K562 (cell line): ENCODE measurements at regions of chr11 and their contacts with region 1.

Region 1: DNA sequence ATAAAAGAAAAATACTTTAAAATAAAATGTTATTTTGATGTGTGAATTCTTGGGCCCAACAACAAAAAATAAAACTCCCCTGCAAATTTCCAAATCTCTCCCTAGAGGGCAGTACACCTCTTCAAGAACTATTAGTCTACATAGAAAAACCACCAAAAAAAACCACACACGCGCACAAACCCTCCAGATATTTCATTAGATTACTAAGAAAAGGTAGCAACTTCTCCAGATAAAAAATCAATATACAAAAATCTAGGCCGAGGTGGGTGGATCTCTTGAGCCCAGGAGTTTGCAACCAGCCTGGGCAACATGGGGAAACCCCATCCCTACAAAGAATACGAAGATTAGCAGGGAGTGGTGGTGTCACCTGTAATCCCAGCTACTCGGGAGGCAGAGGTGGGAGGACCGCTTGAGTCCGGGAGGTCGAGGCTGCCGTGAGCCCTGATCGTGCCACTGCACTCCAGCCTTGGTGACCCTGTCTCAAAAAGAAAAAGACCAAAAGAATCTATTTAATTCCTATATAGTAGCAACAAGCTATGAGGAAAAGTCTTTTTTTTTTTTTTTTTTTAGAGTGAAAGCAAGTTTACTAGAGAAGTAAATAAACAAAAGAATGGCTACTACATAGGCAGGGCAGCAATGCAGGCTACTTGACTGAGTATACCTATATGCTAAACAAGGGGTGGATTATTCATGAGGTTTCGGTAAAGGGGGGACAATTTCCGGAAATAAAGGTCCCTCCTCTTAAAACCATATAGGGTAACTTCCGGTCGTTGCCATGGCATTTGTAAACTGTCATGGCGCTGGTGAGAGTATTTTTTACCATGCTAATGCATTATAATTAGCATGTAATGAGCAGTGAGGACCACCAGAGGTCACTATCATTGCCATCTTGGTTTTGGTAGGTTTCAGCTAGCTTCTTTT is 13.1 kb downstream of the B3GNT6 start:
- DNase-seq: peak; percentile 54 to 93 (median 73)
- ATAC-seq: peak; percentile 91
- H3K4me3 ChIP-seq: peak overlapping the region; percentile 37
- H3K27ac ChIP-seq: no peak overlapping the region
- H3K4me1 ChIP-seq: peaks cover 3 to 6% of the 10 kb centered on the region in 2 experiments; a peak in 4 of 5 replicates
- H3K27me3 ChIP-seq: no peaks in the 10 kb centered on the region
- CTCF ChIP-seq: peak; percentile 65 to 90 (median 69)
- EP300 ChIP-seq: no peak
- POLR2A ChIP-seq: no peak
- RAD21 ChIP-seq: peak; percentile 60 to 71

Region 2: GRCh38 chr11:76721755-76722677 is 325.3 kb before region 1 on chr11:
- CTCF ChIA-PET with region 1: interaction called, 4 read pairs
- POLR2A ChIA-PET with region 1: no interaction called
- in situ Hi-C with region 1: loop called (anchors 10 kb)
- intact Hi-C with region 1: no loop called
- DNase-seq: peak; percentile 62 to 91 (median 78)
- ATAC-seq: peak; percentile 98
- H3K4me3 ChIP-seq: no peak overlapping the region
- H3K27ac ChIP-seq: no peak overlapping the region
- H3K4me1 ChIP-seq: peaks cover 4 to 18% of the 10 kb centered on the region in 2 experiments; a peak in 4 of 5 replicates
- H3K27me3 ChIP-seq: 0 out of 5 replicates have a peak, but pooled peaks cover 2 to 5% of the 10 kb centered on the region in 2 experiments
- CTCF ChIP-seq: peak; percentile 92
- EP300 ChIP-seq: no peak
- POLR2A ChIP-seq: no peak
- RAD21 ChIP-seq: peak; percentile 54 to 78

Region 3: DNA sequence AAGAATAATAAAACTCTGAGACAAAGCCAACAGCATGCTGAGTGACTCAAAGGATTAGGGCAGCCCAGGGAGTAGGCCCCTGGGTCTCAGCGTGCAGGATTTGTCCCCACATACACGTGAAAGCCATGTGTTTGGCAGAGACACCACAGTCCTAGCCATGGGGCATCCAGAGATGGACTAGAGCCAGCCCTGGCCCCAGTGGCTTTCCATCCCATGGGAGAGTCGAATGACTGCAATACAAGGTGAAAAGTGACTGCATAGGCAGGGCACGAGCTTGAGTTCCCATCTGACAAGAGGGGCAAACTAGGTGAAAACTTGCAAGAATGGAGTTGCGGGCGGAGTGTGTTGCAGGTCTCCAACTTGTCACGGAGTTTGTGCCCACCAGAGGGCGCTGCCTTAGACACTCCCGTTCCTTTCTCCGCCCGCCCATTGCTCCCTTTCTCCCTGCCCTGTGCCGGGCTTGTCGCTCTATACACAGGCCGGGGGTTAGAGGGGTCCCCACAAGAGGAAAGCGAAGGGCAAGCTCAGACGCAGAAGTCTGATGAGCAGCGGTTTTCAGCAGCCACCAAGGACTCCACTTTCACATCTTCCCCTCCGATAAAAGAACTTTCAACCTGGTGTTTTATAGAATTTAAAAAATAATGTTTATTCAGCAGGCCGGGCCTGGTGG is 239.9 kb before region 1 on chr11:
- CTCF ChIA-PET with region 1: interaction called, 3 read pairs
- POLR2A ChIA-PET with region 1: no interaction called
- in situ Hi-C with region 1: no loop called
- intact Hi-C with region 1: loop called (anchors 5 kb)
- DNase-seq: peak; percentile 84 to 92 (median 86)
- ATAC-seq: peak; percentile 98
- H3K4me3 ChIP-seq: no peak overlapping the region
- H3K27ac ChIP-seq: no peak overlapping the region
- H3K4me1 ChIP-seq: peaks cover 10 to 20% of the 10 kb centered on the region in 2 experiments; a peak in 4 of 5 replicates
- H3K27me3 ChIP-seq: no peaks in the 10 kb centered on the region
- CTCF ChIP-seq: peak; percentile 85 to 89 (median 89)
- EP300 ChIP-seq: no peak
- POLR2A ChIP-seq: no peak
- RAD21 ChIP-seq: peak; percentile 71 to 86

Region 4: GRCh38 chr11:77091146-77091940 is 44.1 kb after region 1 on chr11:
- CTCF ChIA-PET with region 1: interaction called, 50 read pairs
- POLR2A ChIA-PET with region 1: interaction called, 3 read pairs
- in situ Hi-C with region 1: loop called (anchors 5 kb)
- intact Hi-C with region 1: loop called (anchors 1 kb)
- DNase-seq: peak; percentile 82 to 87 (median 85)
- ATAC-seq: peak; percentile 95
- H3K4me3 ChIP-seq: no peak overlapping the region
- H3K27ac ChIP-seq: no peak overlapping the region
- H3K4me1 ChIP-seq: peaks cover 0 to 20% of the 10 kb centered on the region in 2 experiments; a peak in 3 of 5 replicates
- H3K27me3 ChIP-seq: peaks cover 0 to 30% of the 10 kb centered on the region in 2 experiments; a peak in 3 of 5 replicates
- CTCF ChIP-seq: peak; percentile 96 to 99 (median 98)
- EP300 ChIP-seq: no peak
- POLR2A ChIP-seq: no peak
- RAD21 ChIP-seq: peak; percentile 89 to 91

Region 5: GRCh38 chr11:77101052-77101537 is 53.8 kb after region 1 on chr11:
- CTCF ChIA-PET with region 1: interaction called, 19 read pairs
- POLR2A ChIA-PET with region 1: no interaction called
- in situ Hi-C with region 1: no loop called
- intact Hi-C with region 1: no loop called
- DNase-seq: peak; percentile 60 to 72 (median 70)
- ATAC-seq: peak; percentile 84
- H3K4me3 ChIP-seq: no peak overlapping the region
- H3K27ac ChIP-seq: no peak overlapping the region
- H3K4me1 ChIP-seq: peaks cover 0 to 15% of the 10 kb centered on the region in 2 experiments; a peak in 1 of 5 replicates
- H3K27me3 ChIP-seq: peaks cover 8 to 58% of the 10 kb centered on the region in 2 experiments; a peak in 4 of 5 replicates
- CTCF ChIP-seq: peak; percentile 72 to 77 (median 73)
- EP300 ChIP-seq: no peak
- POLR2A ChIP-seq: no peak
- RAD21 ChIP-seq: peak; percentile 23 to 53; a peak in 3 of 4 replicates

Region 6: DNA sequence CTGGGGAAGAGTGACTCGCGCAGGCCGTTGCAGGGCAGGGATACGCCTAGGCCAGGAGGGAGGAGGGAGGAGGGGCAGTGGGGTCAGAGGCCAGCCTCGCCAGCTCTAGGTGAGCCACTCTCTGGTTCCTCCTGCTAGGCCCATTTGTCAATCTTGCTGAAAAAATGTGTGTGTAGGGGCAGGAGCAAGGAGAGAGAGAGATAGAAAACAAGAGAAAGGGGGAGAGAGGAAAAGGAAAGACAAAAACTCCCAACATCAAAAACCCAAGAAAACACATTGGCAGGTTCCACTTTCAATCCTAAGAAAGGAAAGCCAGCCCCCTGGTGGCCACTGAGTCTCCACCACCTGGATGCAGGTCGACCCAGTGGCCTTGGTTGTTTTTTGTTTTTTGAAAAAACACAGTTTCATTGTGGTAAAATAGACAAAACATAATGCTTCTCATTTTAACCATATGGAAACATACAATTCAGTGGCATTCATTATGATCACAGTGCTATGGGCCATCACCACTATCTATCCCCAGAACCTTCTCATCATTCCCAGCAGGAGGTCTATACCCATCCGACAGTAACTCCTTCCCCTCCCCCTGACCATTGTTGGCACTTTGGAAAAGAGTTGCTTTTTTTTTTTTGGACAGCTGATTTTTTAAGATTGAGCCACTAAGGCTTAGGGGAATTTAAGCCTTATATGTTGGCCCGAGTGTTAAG is 66.3 kb after region 1 on chr11:
- CTCF ChIA-PET with region 1: interaction called, 25 read pairs
- POLR2A ChIA-PET with region 1: no interaction called
- in situ Hi-C with region 1: no loop called
- intact Hi-C with region 1: loop called (anchors 1 kb)
- DNase-seq: peak; percentile 58 to 70 (median 62)
- ATAC-seq: peak; percentile 75
- H3K4me3 ChIP-seq: no peak overlapping the region
- H3K27ac ChIP-seq: no peak overlapping the region
- H3K4me1 ChIP-seq: peaks cover 0 to 13% of the 10 kb centered on the region in 2 experiments; a peak in 2 of 5 replicates
- H3K27me3 ChIP-seq: peaks cover 6 to 71% of the 10 kb centered on the region in 2 experiments; a peak in 3 of 5 replicates
- CTCF ChIP-seq: peak; percentile 69 to 86 (median 71)
- EP300 ChIP-seq: no peak
- POLR2A ChIP-seq: no peak
- RAD21 ChIP-seq: peak; percentile 28; a peak in 2 of 4 replicates

Region 7: DNA sequence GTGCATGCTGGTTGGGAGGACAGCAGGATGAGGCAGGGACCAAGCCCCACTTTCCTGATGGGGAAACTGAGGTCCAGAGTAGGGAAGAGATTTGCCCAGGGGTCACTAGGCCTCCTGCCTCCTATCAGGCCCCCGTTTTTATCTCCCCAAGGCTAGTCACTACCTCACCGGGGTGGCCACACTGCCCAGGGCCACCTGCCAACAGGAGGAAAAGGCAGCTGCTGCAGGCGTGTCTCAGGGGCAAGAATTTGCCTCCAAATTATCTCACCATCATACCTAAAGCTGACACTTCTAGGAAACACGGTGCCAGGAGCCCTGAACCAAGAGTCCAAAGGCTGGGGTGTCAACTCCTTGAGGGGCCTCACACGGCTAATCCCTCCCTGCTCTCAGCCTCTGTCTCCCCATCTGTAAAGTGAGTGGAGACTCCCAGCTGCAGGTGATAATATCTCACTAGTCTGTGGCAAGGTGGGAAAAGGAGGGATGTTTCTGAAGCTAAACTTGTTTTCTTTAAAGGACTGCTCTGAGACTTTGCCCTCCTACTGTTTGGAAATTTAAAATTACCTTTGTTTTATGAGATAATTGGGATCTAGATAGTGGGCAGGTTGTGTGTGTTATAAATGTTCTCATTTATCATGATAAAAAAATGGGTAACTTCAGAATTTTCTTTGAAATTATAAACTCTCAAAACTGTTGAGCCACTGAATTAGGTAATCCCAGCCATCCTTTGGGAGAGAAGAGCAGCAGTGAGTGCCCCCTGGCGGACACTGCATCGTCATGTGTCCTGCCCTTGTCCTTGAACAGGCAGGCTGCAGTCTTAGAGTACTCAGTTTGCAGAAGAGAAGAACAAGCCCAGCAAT is 140.7 kb after region 1 on chr11:
- CTCF ChIA-PET with region 1: interaction called, 7 read pairs
- POLR2A ChIA-PET with region 1: no interaction called
- in situ Hi-C with region 1: loop called (anchors 10 kb)
- intact Hi-C with region 1: loop called (anchors 2 kb)
- DNase-seq: peak; percentile 80 to 85 (median 82)
- ATAC-seq: peak; percentile 82
- H3K4me3 ChIP-seq: no peak overlapping the region
- H3K27ac ChIP-seq: no peak overlapping the region
- H3K4me1 ChIP-seq: peaks cover 4 to 29% of the 10 kb centered on the region in 2 experiments; a peak in 3 of 5 replicates
- H3K27me3 ChIP-seq: peaks cover 9 to 52% of the 10 kb centered on the region in 2 experiments; a peak in 4 of 5 replicates
- CTCF ChIP-seq: peak; percentile 89 to 94 (median 90)
- EP300 ChIP-seq: no peak
- POLR2A ChIP-seq: no peak
- RAD21 ChIP-seq: peak; percentile 82 to 89